ENCODE measurements at regions of chr7 and their contacts with region 1.

Region 1: DNA sequence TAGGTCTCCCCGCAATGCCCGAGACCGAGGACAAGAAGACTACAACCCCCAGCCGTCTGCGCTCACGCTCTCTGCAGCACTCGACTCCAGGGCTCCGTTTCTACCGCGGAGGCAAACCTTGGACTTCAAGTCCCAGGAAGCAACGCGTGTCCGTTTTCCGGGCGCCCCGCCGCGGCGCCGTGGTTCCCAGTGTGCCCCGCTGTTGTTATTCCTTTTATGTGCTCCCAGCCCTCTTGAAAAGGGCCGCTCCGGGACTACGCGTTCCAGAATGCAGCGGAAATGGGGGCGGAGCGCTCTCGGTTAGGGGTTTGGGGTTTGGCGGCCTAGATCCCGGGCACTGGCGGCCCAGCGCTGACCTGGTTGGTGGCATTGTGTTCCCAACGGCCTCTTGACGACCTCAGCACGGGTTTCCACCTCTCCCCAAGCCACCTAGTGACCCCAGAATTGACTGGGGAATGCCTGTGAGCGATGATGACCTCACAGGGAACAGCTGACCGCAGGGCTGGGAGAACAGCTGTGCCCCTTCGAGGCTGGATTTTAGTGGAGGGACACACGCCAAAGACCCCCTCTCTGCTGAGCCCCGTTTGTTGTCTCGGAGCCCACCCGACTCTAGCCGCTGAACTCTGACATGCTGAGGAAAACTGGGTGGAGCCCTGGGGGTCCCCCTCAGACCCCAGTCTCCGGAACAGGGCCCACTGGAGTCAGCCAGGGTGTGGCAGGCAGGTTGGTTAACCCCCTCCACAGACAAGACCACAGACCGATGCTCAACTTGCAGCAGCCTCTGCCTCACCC is 488 bp upstream of the CDK5 start:
- DNase-seq: peak; percentile 99
- ATAC-seq: peak; percentile 79
- H3K4me3 ChIP-seq: peak overlapping the region; percentile 69 to 92 (median 90)
- H3K27ac ChIP-seq: peak overlapping the region; percentile 86
- H3K4me1 ChIP-seq: peaks cover 42% of the 10 kb centered on the region
- H3K27me3 ChIP-seq: no peaks in the 10 kb centered on the region; a peak in 1 of 5 replicates
- CTCF ChIP-seq: no peak
- EP300 ChIP-seq: no peak; a peak in 1 of 4 replicates
- POLR2A ChIP-seq: peak in 1 of 2 experiments; percentile 76; a peak in 2 of 4 replicates
- RAD21 ChIP-seq: no peak

Region 2: DNA sequence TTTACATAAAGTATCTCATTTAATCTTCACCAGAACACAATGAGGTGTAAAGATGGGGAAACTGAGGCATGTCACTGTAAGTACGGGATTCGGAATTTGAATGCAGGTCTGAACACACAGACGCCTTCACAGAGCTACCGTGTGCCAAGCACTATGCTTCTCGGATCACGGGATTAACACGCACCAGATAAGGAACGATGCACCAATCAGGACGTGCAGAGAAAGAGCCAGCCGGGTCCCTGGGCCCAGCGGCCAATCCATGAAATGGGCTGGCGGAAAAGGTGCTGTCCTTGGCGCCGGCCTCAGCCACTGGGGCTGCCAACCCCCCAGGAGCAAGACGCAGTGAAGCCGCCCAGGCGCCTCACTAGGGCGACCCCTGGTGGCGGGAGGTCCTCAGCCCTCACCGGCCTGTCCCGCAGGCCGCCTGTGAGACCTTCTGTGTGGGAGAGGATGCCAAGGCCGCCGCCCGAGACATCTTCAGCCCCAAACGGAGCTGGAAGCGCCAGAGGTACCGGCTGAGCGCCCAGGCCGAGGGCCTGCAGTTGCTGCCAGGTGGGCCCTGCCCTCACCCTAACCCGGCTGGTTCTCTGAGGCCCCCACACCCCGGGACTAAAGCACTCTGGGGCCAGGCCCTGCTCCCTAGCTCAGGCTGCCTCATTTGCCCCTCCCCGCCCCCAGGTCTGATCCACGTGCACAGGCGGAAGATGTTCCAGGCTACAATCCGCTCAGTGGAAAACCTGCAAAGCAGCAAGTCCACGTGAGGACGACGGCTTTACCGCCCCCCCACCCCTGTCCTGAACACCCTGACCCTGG is 49.5 kb before region 1 on chr7:
- CTCF ChIA-PET with region 1: no interaction called
- POLR2A ChIA-PET with region 1: interaction called, 29 read pairs
- in situ Hi-C with region 1: no loop called
- intact Hi-C with region 1: no loop called
- DNase-seq: peak; percentile 47
- ATAC-seq: peak; percentile 62
- H3K4me3 ChIP-seq: peak overlapping the region; percentile 5 to 77 (median 62); a peak in 4 of 6 replicates
- H3K27ac ChIP-seq: no peak overlapping the region
- H3K4me1 ChIP-seq: peaks cover 96% of the 10 kb centered on the region
- H3K27me3 ChIP-seq: peaks cover 0 to 2% of the 10 kb centered on the region in 2 experiments; a peak in 1 of 5 replicates
- CTCF ChIP-seq: peak; percentile 95
- EP300 ChIP-seq: no peak
- POLR2A ChIP-seq: no peak
- RAD21 ChIP-seq: peak; percentile 46

Region 3: DNA sequence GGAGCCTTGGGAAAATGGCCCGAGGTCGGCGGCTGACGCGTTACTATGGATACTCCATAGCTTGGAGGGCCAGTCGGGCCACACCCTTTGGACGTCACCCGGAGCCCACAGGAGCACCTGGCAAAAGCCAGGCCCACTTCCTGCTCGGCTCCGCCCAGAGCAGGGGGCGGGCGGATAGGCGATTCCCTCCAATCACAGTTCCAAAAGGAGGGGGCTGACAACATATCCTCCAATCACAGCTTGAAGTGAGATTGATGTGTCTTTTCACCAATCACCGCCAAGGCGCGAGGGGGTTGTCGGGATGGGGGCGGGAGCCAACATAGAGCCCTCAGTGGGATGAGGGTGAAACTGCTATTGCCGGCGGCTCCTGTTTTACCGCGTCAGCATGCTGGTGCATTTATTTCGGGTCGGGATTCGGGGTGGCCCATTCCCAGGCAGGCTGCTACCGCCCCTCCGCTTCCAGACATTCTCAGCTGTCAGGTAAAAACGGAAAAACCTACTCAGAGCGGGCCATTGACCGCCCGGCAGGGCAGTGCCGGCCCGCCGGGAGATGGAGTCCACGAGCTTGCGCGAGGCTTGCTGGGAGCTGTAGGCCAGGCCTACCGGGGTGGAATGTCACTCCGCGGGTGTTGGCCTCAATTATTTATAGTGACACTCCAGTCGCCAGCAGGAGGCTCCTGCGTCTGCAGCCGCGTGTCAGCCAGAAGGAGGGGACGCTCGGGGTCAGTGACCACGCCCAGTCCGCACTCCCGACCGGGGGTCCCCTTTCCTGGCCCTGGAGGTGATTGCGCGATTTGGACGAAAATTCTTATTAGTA is 29.8 kb before region 1 on chr7 and contains the start of gene ABCB8:
- CTCF ChIA-PET with region 1: interaction called, 3 read pairs
- POLR2A ChIA-PET with region 1: interaction called, 35 read pairs
- in situ Hi-C with region 1: no loop called
- intact Hi-C with region 1: loop called (anchors 1 kb)
- DNase-seq: peak; percentile 97
- ATAC-seq: peak; percentile 95
- H3K4me3 ChIP-seq: peak within 1 kb of the TSS; percentile 77 to 88 (median 82)
- H3K27ac ChIP-seq: peak within 1 kb of the TSS; percentile 62
- H3K4me1 ChIP-seq: peaks cover 27% of the 10 kb centered on the region
- H3K27me3 ChIP-seq: peaks cover 8 to 29% of the 10 kb centered on the region in 2 experiments; a peak in 4 of 5 replicates
- CTCF ChIP-seq: peak; percentile 85
- EP300 ChIP-seq: no peak
- POLR2A ChIP-seq: peak; percentile 42 to 57; a peak in 2 of 4 replicates
- RAD21 ChIP-seq: peak; percentile 72
- total RNA-seq, gene ABCB8: 7.2 and 16.7 TPM in 2 replicates

Region 4: GRCh38 chr7:151074051-151074450 is 15.9 kb after region 1 on chr7:
- CTCF ChIA-PET with region 1: no interaction called
- POLR2A ChIA-PET with region 1: interaction called, 60 read pairs
- in situ Hi-C with region 1: no loop called
- intact Hi-C with region 1: no loop called
- DNase-seq: no peak
- ATAC-seq: no peak
- H3K4me3 ChIP-seq: no peak overlapping the region
- H3K27ac ChIP-seq: no peak overlapping the region
- H3K4me1 ChIP-seq: peaks cover 4% of the 10 kb centered on the region
- H3K27me3 ChIP-seq: no peaks in the 10 kb centered on the region
- CTCF ChIP-seq: no peak
- EP300 ChIP-seq: no peak
- POLR2A ChIP-seq: no peak
- RAD21 ChIP-seq: no peak

Region 5: DNA sequence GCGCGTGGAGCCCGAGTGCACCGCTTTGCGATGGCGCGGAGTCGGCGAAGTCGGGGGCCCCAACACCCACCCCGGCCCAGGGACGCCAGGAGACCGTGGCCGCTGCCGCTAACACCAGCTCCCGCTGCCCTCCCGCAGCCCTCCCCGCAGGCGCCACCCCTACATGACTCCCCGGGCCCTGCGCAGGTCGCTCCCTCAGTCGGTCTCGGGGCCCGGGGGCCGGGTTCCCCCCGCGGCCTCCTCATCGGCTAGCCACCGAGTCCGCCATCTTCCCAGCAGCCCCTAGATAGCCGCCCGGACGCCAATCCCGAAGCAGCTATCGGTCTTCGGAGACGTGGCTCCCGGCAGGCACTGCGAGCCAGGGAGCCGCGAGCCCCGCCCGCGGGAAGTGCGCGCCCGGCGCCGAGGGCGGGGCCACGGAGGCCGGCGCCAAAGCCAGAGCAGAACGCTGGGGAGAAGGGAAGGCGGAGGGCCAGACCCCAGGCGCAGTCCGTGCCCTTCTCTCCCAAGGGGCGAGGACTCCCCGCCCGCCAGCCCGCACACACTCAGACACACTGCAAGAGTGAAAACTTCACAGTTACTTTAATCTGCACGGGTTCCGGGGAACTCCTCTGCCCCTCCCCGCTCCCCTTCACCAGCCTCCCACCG is 22.5 kb after region 1 on chr7 and contains the start of gene FASTK:
- CTCF ChIA-PET with region 1: no interaction called
- POLR2A ChIA-PET with region 1: interaction called, 144 read pairs
- in situ Hi-C with region 1: no loop called
- intact Hi-C with region 1: loop called (anchors 1 kb)
- DNase-seq: peak; percentile 77
- ATAC-seq: peak; percentile 72
- H3K4me3 ChIP-seq: peak within 1 kb of the TSS; percentile 85 to 96 (median 88)
- H3K27ac ChIP-seq: peak within 1 kb of the TSS; percentile 85
- H3K4me1 ChIP-seq: peaks cover 45% of the 10 kb centered on the region
- H3K27me3 ChIP-seq: no peaks in the 10 kb centered on the region; a peak in 1 of 5 replicates
- CTCF ChIP-seq: no peak
- EP300 ChIP-seq: peak in 1 of 2 experiments; percentile 20; a peak in 1 of 4 replicates
- POLR2A ChIP-seq: peak in 1 of 2 experiments; percentile 77; a peak in 2 of 4 replicates
- RAD21 ChIP-seq: peak; percentile 42; the same call in 1 of the 2 replicates
- total RNA-seq, gene FASTK: 33.0 and 52.9 TPM in 2 replicates

Region 6: DNA sequence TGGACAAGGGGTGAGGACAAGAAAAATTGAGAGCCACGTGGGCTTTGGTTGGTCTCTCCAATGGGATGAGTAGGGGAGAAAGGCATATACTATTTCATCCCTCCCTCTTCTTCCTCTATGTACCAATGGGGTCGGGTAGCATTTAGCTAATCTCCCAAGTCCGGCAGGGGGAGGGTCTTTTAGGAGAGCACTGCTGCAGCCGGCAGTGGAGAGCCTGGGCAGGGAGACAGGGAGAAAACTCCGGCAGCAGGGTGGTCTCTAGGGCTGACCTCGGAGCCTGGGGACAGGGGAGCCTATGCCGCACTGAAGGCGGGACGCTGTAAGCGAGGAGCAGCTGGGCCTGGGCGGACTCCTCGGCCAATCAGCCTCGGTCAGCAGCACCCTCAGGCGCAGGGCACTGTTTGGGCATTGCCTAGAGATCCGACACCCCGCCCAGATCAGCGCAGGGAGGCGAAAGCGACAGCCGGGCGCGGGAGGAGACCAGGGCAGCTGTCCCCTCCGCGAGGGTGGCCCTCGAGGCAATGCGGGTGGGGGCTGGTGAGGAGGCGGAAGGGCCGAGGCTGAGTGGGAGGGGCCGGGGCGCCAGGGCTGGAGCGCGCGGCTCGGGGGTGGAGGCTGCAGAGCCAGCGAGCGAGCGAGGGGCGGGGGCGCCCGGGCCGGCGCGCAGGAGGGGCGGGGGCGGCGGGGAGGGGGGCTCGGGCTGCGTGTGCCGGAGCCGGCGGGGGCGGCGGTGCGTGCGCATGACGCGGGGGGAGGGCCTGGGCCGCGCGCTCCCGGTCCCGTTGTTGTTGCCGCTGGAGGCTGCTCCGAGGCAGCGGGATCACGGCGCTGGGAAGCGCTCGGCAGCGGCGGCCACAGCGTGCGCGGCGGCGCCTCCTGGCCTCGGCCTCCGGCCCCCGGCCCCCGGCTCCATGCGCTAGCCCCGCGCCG is 27.8 kb after region 1 on chr7 and contains the start of gene AGAP3:
- CTCF ChIA-PET with region 1: no interaction called
- POLR2A ChIA-PET with region 1: interaction called, 144 read pairs
- in situ Hi-C with region 1: no loop called
- intact Hi-C with region 1: loop called (anchors 2 kb)
- DNase-seq: peak; percentile 75
- ATAC-seq: peak; percentile 40
- H3K4me3 ChIP-seq: peak within 1 kb of the TSS; percentile 93 to 98 (median 95)
- H3K27ac ChIP-seq: peak within 1 kb of the TSS; percentile 70
- H3K4me1 ChIP-seq: peaks cover 70% of the 10 kb centered on the region
- H3K27me3 ChIP-seq: no peaks in the 10 kb centered on the region; a peak in 1 of 5 replicates
- CTCF ChIP-seq: peak; percentile 15; the same call in 1 of the 2 replicates
- EP300 ChIP-seq: no peak
- POLR2A ChIP-seq: peak in 1 of 2 experiments; percentile 58; a peak in 2 of 4 replicates
- RAD21 ChIP-seq: no peak
- total RNA-seq, gene AGAP3: 24.9 and 31.3 TPM in 2 replicates

Region 7: DNA sequence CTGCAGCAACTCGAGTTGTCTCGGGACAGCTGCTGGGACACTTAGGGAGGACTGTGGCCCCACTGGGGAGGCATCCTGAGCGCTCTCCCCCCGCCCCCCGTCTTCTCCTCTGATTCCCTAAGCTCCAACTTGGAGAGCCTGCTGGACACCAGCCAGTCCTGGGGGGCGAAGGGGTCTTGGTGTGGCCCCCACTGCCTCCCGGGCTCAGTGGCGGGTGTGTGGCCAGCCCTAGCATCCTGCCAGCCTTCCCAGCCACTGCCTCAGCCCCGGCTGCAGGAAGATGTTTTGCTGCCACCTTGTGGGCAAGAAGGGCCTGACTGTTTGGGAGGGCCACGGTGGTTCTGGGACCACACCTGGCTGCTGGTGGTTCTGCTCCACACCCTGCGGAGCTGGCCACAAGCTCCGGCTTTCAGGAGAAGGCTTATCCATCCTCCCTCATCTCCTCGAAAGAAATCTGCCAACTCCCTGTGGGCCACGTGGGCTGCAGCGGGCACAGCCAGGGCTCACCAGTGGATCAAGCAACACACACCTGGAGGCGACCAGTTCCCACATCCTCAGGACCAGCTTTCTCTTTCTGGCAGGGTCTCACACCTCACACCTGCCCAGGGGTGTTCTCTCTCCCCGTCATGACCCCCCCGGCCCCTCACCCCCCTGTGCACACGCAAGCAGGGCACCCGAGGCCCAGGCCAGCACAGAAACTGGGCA is 52.9 kb after region 1 on chr7:
- CTCF ChIA-PET with region 1: interaction called, 3 read pairs
- POLR2A ChIA-PET with region 1: interaction called, 4 read pairs
- in situ Hi-C with region 1: no loop called
- intact Hi-C with region 1: loop called (anchors 2 kb)
- DNase-seq: peak; percentile 49
- ATAC-seq: peak; percentile 92
- H3K4me3 ChIP-seq: no peak overlapping the region
- H3K27ac ChIP-seq: no peak overlapping the region
- H3K4me1 ChIP-seq: peaks cover 14% of the 10 kb centered on the region
- H3K27me3 ChIP-seq: no peaks in the 10 kb centered on the region
- CTCF ChIP-seq: peak; percentile 97
- EP300 ChIP-seq: no peak
- POLR2A ChIP-seq: no peak
- RAD21 ChIP-seq: peak; percentile 90

Measured in HepG2 (cell line).